Activated T-helper 1 cell treated with anti-CD3 and anti-CD28 coated beads, Interleukin-12 subunit alpha, Interleukin-12 subunit beta, Interleukin-2, Interleukin-4 antibody, amounts not matched to agents 30 ng/mL and 10 ng/mL and 1 ng/mL, durations not matched to agents 14 hours and 24 hours and 36 hours (primary cell): ENCODE measurements at regions of chr3 and their contacts with region 1.

Region 1: DNA sequence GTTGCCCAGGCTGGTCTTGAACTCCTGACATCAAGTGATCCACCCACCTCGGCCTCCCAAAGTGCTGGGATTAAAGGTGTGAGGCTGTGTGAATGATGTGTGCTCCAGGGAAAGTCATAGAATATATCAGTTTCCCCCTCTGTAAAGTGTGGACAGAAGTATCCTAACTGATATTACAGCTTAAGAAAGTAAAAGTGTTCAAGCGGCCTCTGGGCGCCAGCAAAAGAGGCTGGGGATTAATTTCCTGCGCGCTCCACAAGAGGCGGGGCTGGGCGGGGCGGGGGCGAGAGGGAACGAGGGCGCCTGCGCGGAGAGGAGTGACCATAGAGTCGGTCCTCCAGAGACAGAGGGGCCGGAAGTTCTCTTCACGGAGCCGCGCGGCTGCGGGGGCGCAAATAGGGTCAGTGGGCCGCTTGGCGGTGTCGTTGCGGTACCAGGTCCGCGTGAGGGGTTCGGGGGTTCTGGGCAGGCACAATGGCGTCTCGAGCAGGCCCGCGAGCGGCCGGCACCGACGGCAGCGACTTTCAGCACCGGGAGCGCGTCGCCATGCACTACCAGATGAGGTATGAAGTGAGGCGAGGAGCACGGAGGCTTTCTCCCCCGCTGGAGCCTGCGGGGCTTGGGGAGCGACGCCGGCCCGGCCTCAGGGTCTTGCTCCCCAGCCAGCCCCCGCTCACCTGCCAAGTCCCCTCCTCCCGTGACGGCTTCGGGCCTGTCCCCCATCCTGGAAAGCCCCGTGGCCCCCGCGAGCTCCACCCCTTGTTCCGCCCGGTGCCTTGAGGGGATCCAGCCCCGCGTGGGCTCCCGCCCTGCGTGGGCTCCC is at the start of gene JAGN1:
- DNase-seq: peak; percentile 82
- H3K4me3 Mint-ChIP-seq: peak within 1 kb of the TSS; percentile 97
- H3K27ac Mint-ChIP-seq: peak within 1 kb of the TSS; percentile 98
- H3K4me1 Mint-ChIP-seq: peaks cover 36% of the 10 kb centered on the region
- H3K27me3 Mint-ChIP-seq: no peaks in the 10 kb centered on the region
- total RNA-seq, gene JAGN1: 42.4 and 46.3 TPM in 2 replicates

Region 2: DNA sequence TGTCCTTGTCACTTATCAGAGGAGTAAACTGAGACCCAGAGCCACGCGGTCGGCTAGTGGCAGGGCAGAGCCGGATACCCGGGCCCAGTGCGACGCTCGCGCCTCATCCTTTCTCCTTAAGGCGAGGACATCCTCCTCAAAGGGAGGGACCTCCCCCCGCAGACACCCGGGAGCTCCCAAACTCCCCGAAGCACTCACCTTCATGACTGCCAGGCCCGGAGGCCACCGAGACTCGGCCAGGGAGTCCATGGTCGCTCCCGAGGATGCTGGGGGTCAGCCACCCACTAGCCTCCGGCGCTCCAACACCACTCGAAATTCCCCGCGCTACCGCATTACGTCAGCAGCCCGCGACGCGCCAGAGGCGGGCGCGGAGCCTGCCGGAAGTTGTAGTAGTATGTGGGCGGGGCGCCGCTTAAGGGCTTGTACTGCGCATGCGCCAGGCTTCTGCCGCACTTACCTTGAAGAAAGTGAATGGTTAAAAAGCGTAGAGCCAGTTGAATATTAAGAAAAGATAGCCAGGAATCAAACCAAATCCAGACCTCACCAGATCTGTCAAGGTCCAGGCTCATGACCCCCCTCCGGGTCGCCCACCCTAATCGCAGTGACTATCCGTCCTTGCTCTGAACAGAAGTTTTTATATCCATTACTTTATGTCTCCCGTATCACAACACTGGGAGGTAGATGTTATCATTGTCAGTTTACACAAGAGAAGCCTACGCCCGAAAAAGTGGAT is 927.2 kb before region 1 on chr3 and contains the start of gene RAD18:
- intact Hi-C with region 1: loop called (anchors 5 kb)
- DNase-seq: peak; percentile 91
- H3K4me3 Mint-ChIP-seq: peak within 1 kb of the TSS; percentile 98
- H3K27ac Mint-ChIP-seq: peak within 1 kb of the TSS; percentile 97
- H3K4me1 Mint-ChIP-seq: peaks cover 62% of the 10 kb centered on the region
- H3K27me3 Mint-ChIP-seq: peaks cover 7% of the 10 kb centered on the region
- total RNA-seq, gene RAD18: 52.8 and 54.2 TPM in 2 replicates

Region 3: GRCh38 chr3:9731206-9732079 is 159.0 kb before region 1 on chr3 and contains the start of gene BRPF1:
- intact Hi-C with region 1: loop called (anchors 1 kb)
- DNase-seq: peak; percentile 96
- H3K4me3 Mint-ChIP-seq: peak within 1 kb of the TSS; percentile 96
- H3K27ac Mint-ChIP-seq: peak within 1 kb of the TSS; percentile 94
- H3K4me1 Mint-ChIP-seq: peaks cover 58% of the 10 kb centered on the region
- H3K27me3 Mint-ChIP-seq: no peaks in the 10 kb centered on the region
- total RNA-seq, gene BRPF1: 44.6 and 45.9 TPM in 2 replicates

Region 4: DNA sequence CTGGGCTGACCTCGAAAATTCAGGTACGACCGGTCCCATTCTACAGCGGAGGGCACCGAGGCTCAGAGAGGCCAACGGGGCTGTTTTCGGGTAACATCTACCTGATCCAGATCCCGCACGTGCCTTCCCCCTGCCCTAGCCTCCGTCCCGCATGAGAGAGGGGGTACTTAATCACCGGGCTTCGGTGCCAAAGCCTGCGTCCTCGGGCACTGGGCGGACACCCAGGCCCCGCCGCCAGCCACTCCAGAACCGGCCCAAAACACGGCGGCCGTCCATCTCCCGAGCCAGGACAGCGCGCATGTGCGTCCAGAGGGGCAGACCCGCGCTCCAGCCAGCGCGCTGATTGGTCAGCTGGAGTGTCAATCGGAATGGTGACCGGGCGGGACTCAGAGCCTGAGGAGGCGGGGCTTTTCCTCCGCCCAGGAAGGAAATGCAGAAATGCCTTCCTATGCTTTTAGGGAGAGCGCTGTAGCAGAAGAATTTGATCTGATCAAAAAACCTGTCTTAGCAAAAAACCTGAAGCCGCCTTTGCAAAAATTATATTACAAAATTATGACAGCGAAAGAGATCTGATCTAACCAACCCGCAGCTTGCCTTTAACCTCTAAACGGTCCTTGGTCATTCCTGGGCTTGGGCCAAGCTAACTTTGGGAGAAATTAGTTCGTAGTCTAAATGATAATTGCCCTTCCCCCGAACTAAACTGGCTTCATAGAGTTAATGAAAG is 46.6 kb before region 1 on chr3 and contains the start of gene RPUSD3:
- intact Hi-C with region 1: loop called (anchors 1 kb)
- DNase-seq: peak; percentile 95
- H3K4me3 Mint-ChIP-seq: peak within 1 kb of the TSS; percentile 98
- H3K27ac Mint-ChIP-seq: peak within 1 kb of the TSS; percentile 91
- H3K4me1 Mint-ChIP-seq: peaks cover 28% of the 10 kb centered on the region
- H3K27me3 Mint-ChIP-seq: no peaks in the 10 kb centered on the region
- total RNA-seq, gene RPUSD3: 79.2 and 79.5 TPM in 2 replicates

Region 5: GRCh38 chr3:9946112-9947024 is 55.9 kb after region 1 on chr3:
- intact Hi-C with region 1: loop called (anchors 1 kb)
- DNase-seq: peak; percentile 86
- H3K4me3 Mint-ChIP-seq: peak overlapping the region; percentile 89
- H3K27ac Mint-ChIP-seq: peak overlapping the region; percentile 82
- H3K4me1 Mint-ChIP-seq: peaks cover 18% of the 10 kb centered on the region
- H3K27me3 Mint-ChIP-seq: no peaks in the 10 kb centered on the region

Region 6: GRCh38 chr3:10010486-10011465 is 120.3 kb after region 1 on chr3:
- intact Hi-C with region 1: loop called (anchors 1 kb)
- DNase-seq: peak; percentile 85
- H3K4me3 Mint-ChIP-seq: peak overlapping the region; percentile 70
- H3K27ac Mint-ChIP-seq: no peak overlapping the region
- H3K4me1 Mint-ChIP-seq: peaks cover 29% of the 10 kb centered on the region
- H3K27me3 Mint-ChIP-seq: peaks cover 4% of the 10 kb centered on the region

Region 7: GRCh38 chr3:10248184-10249080 is 358.0 kb after region 1 on chr3 and contains the start of gene TATDN2:
- intact Hi-C with region 1: loop called (anchors 1 kb)
- DNase-seq: peak; percentile 93
- H3K4me3 Mint-ChIP-seq: peak within 1 kb of the TSS; percentile 97
- H3K27ac Mint-ChIP-seq: peak within 1 kb of the TSS; percentile 97
- H3K4me1 Mint-ChIP-seq: peaks cover 62% of the 10 kb centered on the region
- H3K27me3 Mint-ChIP-seq: no peaks in the 10 kb centered on the region
- total RNA-seq, gene TATDN2: 80.4 and 81.5 TPM in 2 replicates